HEK293 (cell line): ENCODE measurements at regions of chr19 and their contacts with region 1.

Region 1: DNA sequence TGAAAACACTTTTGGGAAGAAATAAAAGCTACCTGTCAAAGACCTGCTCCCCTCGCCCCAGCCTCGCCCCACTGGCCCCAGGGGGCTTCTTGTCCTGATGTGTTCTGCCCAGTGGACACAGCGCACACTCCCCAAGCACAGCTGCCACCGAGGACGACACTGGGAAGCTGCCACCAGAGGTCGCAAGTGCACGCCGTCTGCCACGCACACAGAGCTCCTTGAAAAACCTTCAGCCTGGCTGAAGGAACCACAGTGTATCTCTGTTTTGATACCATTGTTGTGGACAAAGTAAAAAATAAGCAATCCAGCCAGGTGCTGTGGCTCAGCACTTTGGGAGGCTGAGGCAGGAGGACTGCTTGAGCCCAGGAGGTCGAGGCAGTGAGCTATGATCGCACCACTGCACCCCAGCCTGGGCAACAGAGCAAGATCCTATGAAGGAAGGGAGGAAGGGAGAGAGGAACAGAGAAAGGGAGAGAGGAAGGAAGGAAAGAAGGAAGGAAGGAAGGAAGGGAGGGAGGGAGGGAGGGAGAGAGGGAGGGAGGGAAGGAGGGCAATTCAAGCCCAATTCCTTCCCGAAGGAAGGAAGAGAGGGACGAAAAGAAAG is 57.3 kb downstream of the CEBPG start:
- H3K4me3 ChIP-seq: no peak overlapping the region
- H3K27ac ChIP-seq: no peak overlapping the region
- H3K4me1 ChIP-seq: peaks cover 17% of the 10 kb centered on the region
- CTCF ChIP-seq: peak; percentile 98

Region 2: DNA sequence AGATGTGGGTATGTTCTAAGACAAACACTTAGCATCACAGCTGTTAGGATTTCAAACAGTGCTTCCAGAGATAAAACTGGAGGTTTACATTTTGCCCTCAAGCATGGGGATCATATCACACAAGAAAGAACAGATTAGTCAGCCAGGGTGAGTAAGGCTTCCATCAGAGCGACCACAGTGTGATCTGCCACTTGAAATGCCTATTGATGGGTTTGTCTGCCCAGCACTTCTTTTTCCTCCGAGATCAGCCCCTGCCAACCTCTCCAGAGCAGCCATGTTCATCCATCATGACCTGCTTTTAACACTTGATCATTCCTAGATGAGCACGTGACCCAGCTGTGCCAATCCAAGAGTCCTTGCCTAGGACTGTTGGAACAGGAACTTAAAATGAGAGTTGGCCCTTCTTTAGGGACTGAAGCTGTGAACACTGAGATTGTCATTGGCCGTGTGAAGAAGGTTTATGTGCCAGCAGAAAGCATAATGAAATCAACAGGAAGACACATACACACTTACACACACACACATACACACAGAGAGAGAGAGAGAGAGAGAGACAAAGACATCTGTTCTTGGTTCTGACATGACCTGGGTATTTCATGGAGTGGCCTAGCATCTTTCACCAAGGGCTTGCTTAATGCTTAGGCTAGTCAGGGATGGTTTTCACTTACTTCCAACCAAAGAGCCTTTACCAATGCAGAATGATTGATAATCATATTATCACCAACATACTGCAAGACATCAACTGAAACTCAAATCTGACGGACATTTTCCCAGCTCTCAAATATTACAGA is 62.5 kb before region 1 on chr19:
- CTCF ChIA-PET with region 1: no interaction called
- POLR2A ChIA-PET with region 1: no interaction called
- H3K4me3 ChIP-seq: no peak overlapping the region
- H3K27ac ChIP-seq: no peak overlapping the region
- H3K4me1 ChIP-seq: peaks cover 2% of the 10 kb centered on the region; the same call in 1 of the 2 replicates
- CTCF ChIP-seq: no peak

Region 3: GRCh38 chr19:33416307-33417215 is 14.2 kb before region 1 on chr19:
- CTCF ChIA-PET with region 1: interaction called, 67 read pairs
- POLR2A ChIA-PET with region 1: no interaction called
- H3K4me3 ChIP-seq: no peak overlapping the region
- H3K27ac ChIP-seq: peak overlapping the region; percentile 49; the same call in 1 of the 2 replicates
- H3K4me1 ChIP-seq: peaks cover 7% of the 10 kb centered on the region
- CTCF ChIP-seq: peak; percentile 98

Region 4: DNA sequence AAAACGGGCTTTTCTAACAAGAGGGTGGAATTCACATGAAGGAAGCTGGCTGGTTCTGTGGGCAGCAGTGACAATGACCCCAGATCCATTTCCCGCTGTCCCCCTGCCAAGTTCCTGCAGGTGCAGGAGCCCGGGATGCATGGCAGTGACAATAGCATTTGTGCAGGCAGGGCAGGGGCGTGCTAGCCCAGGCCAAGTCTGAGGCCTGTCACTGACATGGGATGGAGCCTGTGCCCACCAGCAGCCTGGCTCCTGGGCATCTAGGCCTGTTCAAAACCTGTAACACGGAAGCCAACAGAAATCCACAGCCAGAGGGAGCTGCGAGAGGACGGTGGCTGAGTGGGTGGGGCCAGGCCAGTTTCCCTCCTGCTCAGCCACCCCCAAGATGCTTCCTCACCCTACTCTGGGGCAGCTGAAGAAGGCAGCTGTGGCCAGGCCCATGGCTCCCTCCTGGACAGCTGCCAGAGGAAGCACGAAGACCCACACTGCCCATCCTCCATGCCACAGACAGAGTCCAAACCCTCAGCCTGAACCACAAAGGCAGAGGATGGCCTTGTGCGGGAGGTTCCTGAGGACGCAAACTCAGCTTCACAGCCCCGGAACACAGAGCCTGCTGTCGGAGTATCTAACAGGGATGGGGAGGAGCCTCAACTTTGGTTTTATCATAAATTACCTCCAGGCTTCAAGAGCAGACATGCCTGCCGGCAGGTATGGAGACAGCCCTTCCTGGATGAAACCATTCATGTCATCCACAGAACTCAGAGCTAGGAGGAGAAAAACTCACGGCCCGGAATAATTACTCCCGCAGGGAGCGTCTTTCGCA is 16.8 kb after region 1 on chr19:
- CTCF ChIA-PET with region 1: interaction called, 21 read pairs
- POLR2A ChIA-PET with region 1: no interaction called
- H3K4me3 ChIP-seq: no peak overlapping the region
- H3K27ac ChIP-seq: no peak overlapping the region
- H3K4me1 ChIP-seq: no peaks in the 10 kb centered on the region
- CTCF ChIP-seq: no peak

Region 5: DNA sequence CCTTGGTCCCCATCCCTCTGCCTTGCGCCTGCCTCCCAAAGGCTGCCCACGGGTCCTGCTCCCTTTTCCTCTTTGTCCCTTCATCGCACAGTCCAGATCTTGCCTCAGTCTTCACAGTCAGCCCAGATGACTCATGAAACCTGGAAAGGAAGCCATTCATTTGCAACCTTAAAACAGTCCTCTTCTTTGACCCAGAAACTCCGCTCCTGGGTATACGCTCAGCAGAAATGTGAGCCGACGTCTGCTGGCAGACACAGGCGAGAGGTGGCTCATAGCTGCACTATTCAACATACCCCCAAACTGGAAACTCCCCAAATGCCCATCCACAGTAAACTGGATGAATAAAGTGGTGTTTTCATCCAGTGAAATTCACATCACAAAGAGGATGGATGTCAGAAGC is 104.5 kb after region 1 on chr19:
- CTCF ChIA-PET with region 1: interaction called, 12 read pairs
- POLR2A ChIA-PET with region 1: no interaction called
- H3K4me3 ChIP-seq: no peak overlapping the region
- H3K27ac ChIP-seq: no peak overlapping the region
- H3K4me1 ChIP-seq: no peaks in the 10 kb centered on the region
- CTCF ChIP-seq: no peak

Region 6: DNA sequence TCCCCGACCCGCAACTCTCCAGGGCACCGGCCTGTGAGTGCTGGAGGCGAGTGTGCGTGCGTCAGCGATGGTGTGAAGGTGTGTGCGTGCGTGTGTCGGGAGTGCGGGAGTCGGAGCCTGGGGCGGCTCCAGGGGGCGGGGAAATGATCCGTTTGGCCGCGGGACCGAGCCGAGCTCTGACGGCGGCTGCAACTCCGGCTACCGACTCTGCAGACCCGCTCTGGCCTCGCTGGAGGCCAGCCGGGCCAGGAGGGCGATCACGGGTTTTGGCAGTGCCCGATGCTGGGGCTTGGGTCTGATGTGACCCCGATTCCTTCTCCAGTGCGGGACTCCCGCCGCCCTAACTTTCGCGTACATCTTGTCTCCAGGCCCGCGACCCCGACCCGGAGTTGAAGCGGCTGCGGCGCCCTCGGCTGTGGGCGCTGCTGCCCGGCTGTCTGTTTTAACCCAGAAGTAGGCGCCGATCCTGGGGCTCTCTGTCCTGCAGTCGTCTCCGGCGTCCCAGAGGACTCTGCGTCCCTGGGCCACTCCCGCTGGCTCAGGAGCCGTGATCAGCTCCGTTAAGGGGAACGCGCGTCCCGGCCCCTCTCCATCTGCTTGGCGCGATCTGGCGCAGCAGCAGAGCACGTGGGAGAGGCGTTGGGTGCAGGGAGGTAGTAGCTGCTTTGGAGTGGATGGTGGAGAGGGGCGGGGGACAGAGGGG is 192.2 kb after region 1 on chr19:
- CTCF ChIA-PET with region 1: interaction called, 10 read pairs
- POLR2A ChIA-PET with region 1: interaction called, 6 read pairs
- H3K4me3 ChIP-seq: peak overlapping the region; percentile 43
- H3K27ac ChIP-seq: peak overlapping the region; percentile 67; the same call in 1 of the 2 replicates
- H3K4me1 ChIP-seq: peaks cover 9% of the 10 kb centered on the region
- CTCF ChIP-seq: no peak

Region 7: DNA sequence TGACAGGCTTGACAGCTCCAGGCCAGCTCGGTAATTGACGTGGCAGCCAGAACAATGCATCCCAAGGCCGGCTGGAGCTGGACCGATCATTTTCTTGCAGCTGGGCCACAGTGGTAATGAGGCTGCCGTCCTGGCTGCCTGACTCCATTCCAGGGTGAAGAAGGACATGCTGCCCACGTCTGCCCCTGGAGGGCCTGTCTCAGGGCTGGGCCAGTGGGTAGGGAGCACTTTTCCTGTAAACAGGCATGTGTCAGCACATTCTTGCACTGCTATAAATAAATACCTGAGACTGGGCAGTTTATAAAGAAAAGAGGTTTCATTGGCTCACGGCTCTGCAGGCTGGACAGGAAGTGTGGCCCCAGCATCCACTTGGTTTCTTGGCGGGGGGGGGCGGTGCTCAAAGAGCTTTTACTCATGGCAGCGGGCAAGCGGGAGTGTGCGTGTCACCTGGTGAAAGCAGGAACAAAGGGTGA is 327.8 kb after region 1 on chr19:
- CTCF ChIA-PET with region 1: interaction called, 14 read pairs
- POLR2A ChIA-PET with region 1: interaction called, 4 read pairs
- H3K4me3 ChIP-seq: no peak overlapping the region
- H3K27ac ChIP-seq: no peak overlapping the region
- H3K4me1 ChIP-seq: 0 out of 2 replicates have a peak, but pooled peaks cover 2% of the 10 kb centered on the region
- CTCF ChIP-seq: no peak

Region 8: GRCh38 chr19:33771384-33772101 is 340.8 kb after region 1 on chr19:
- CTCF ChIA-PET with region 1: interaction called, 173 read pairs
- POLR2A ChIA-PET with region 1: no interaction called
- H3K4me3 ChIP-seq: no peak overlapping the region
- H3K27ac ChIP-seq: no peak overlapping the region
- H3K4me1 ChIP-seq: no peaks in the 10 kb centered on the region
- CTCF ChIP-seq: peak; percentile 99